ENCODE measurements at regions of chrX and their contacts with region 1.

Region 1: GRCh38 chrX:19990556-19991349 is at the start of gene BCLAF3:
- DNase-seq: peak; percentile 76
- H3K4me3 ChIP-seq: peak within 1 kb of the TSS; percentile 60 to 74 (median 65)
- H3K27ac ChIP-seq: no peak within 1 kb of the TSS
- H3K4me1 ChIP-seq: peaks cover 3% of the 10 kb centered on the region
- H3K27me3 ChIP-seq: no peaks in the 10 kb centered on the region
- CTCF ChIP-seq: peak; percentile 65 to 80
- POLR2A ChIP-seq: no peak
- total RNA-seq, gene BCLAF3: 5.0 and 5.1 TPM in 2 replicates

Region 2: GRCh38 chrX:19372170-19372546 is 618.6 kb before region 1 on chrX:
- CTCF ChIA-PET with region 1: no interaction called
- POLR2A ChIA-PET with region 1: no interaction called
- dilution Hi-C with region 1: no loop called
- intact Hi-C with region 1: loop called (anchors 2 kb)
- DNase-seq: peak; percentile 75
- H3K4me3 ChIP-seq: peak overlapping the region in 2 of 3 experiments; percentile 36 to 50
- H3K27ac ChIP-seq: no peak overlapping the region
- H3K4me1 ChIP-seq: no peaks in the 10 kb centered on the region
- H3K27me3 ChIP-seq: no peaks in the 10 kb centered on the region
- CTCF ChIP-seq: peak; percentile 62 to 66
- POLR2A ChIP-seq: no peak

Region 3: DNA sequence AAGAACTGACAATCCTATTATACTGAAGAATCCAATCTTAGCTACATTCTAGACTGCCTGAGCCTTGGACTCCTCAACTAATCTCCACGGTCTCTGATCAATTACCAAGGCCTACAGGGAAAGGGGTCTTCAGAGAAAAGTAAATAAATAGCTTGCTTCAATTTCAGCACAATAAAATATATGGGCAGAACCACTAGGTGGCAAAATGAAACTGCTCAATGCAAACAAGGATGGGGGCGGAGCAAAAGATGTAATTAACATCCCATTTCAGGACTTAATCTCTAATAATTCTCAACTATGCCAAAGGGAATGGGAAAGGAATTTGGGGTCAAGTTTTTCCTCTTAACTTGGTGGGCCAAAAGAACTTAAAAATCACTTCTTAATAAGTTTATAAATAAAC is 397.1 kb before region 1 on chrX:
- CTCF ChIA-PET with region 1: no interaction called
- POLR2A ChIA-PET with region 1: no interaction called
- dilution Hi-C with region 1: no loop called
- intact Hi-C with region 1: loop called (anchors 1 kb)
- DNase-seq: peak; percentile 52
- H3K4me3 ChIP-seq: no peak overlapping the region
- H3K27ac ChIP-seq: no peak overlapping the region
- H3K4me1 ChIP-seq: no peaks in the 10 kb centered on the region
- H3K27me3 ChIP-seq: no peaks in the 10 kb centered on the region
- CTCF ChIP-seq: peak; percentile 22 to 27
- POLR2A ChIP-seq: no peak

Region 4: DNA sequence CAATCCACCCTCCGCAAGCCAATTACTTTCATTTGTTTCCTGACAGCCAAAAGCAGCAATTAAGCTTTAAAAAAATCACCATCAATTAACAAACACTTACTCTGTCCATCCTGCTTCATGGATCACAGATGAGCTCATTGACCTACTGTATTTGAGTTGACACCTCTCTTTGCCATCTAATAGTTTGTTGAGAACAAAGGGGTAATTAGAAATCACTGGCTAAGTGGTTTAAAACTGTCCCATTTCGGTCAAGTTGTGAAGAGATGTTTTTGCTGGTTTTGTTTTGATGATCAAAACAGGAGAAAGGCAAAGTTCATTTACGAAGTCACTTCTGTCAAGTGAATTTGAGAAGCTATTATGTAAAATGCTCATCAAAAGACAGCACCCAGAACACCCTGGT is 113.8 kb before region 1 on chrX:
- CTCF ChIA-PET with region 1: no interaction called
- POLR2A ChIA-PET with region 1: no interaction called
- dilution Hi-C with region 1: no loop called
- intact Hi-C with region 1: no loop called
- DNase-seq: no peak
- H3K4me3 ChIP-seq: no peak overlapping the region
- H3K27ac ChIP-seq: no peak overlapping the region
- H3K4me1 ChIP-seq: no peaks in the 10 kb centered on the region
- H3K27me3 ChIP-seq: no peaks in the 10 kb centered on the region
- CTCF ChIP-seq: no peak
- POLR2A ChIP-seq: no peak

Region 5: GRCh38 chrX:19887911-19888879 is 102.6 kb before region 1 on chrX:
- CTCF ChIA-PET with region 1: no interaction called
- POLR2A ChIA-PET with region 1: no interaction called
- dilution Hi-C with region 1: no loop called
- intact Hi-C with region 1: loop called (anchors 1 kb)
- DNase-seq: peak; percentile 70
- H3K4me3 ChIP-seq: peak overlapping the region; percentile 20 to 42 (median 40)
- H3K27ac ChIP-seq: peak overlapping the region; percentile 14
- H3K4me1 ChIP-seq: peaks cover 3% of the 10 kb centered on the region
- H3K27me3 ChIP-seq: no peaks in the 10 kb centered on the region
- CTCF ChIP-seq: peak; percentile 37 to 38
- POLR2A ChIP-seq: no peak

Region 6: DNA sequence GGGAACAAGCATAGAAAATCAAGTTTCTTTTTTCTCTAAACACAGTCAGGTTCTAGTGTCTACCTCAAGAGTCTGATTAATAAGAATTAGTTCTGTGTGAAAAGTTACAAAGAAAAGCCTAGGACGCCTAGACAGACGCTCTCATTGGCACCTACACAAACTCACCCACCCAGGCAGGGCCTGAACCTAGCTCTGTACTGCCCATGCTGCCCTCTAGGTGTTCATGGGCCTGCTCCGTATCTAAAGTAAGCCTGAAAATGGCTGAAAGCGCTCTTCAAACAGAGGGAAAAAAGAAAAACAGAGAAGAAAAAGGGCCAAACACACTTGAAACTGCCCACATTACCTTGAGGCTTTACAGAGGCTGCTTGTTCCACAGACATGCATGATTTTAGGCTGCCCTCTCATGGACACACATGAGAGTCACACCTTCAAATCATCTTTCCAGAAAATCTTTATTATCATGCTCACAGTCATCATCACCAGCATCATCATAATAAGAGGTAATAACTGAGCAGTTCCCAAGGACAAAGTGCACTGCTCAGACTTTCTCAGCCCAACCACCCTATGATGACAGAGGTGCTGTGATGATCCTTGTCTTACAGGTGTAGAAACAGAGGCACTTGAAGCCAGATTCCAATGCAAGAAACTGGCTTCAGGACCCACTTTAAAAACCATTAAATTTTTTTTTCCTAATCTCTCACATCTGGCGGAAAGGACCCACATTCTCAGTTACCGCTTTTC is 76.4 kb after region 1 on chrX:
- CTCF ChIA-PET with region 1: no interaction called
- POLR2A ChIA-PET with region 1: no interaction called
- dilution Hi-C with region 1: no loop called
- intact Hi-C with region 1: loop called (anchors 1 kb)
- DNase-seq: peak; percentile 11
- H3K4me3 ChIP-seq: no peak overlapping the region
- H3K27ac ChIP-seq: no peak overlapping the region
- H3K4me1 ChIP-seq: peaks cover 4% of the 10 kb centered on the region
- H3K27me3 ChIP-seq: no peaks in the 10 kb centered on the region
- CTCF ChIP-seq: peak in 1 of 2 donors; percentile 15
- POLR2A ChIP-seq: no peak

Measured in endothelial cell of umbilical vein (primary cell).